CD4-positive, alpha-beta memory T cell (primary cell): ENCODE measurements at regions of chr1 and their contacts with region 1.

Region 1: DNA sequence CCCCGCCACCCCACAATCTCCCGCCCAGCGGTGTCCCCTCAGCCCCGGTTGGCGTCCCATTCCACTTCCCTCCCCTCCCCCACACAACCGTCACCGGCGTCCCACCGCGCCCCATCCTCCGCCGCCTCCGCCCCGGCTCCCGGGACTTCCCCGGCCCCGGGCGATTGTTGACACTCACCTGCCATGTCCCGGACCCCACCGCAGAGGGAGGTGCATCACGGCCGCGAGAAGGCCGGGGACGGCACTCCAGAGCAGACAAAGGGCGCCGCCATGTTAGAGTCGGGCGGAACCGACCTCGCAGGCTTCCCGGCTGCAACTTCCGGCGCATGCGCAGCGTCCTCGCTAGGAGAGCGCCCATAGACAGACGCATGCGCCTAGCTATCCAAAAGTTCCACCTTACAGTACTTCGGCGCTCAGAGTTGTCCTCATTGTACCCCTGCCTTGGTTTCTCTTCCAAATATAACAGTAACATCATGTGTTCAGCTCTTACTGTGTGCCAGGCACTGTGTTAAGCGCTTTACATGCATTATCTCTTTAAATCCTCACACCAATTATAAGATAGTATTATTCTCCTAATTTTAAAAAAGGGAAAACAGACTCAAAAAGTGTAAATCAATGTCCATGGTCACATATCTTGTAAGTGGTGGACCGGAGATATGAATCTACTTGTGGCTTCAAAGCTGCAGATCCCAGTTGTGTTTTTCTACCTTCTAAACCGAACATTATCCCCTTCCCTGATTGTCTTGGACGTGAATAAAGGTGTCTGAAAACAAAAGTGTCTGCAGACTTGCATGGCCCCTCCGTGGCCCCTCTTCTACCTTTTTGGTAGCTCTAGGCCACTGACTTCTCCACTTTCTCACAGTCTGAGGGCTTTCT is at the start of gene ZBTB17:
- DNase-seq: peak; percentile 94 to 96 (median 95)
- H3K4me3 ChIP-seq: peak within 1 kb of the TSS; percentile 43 to 83
- H3K4me3 Mint-ChIP-seq: peak within 1 kb of the TSS; percentile 87 to 97 (median 89)
- H3K27ac ChIP-seq: peak within 1 kb of the TSS; percentile 70
- H3K27ac Mint-ChIP-seq: peak within 1 kb of the TSS; percentile 88 to 96 (median 94)
- H3K4me1 ChIP-seq: peaks cover 25% of the 10 kb centered on the region
- H3K4me1 Mint-ChIP-seq: peaks cover 22 to 43% (median 32%) of the 10 kb centered on the region in 4 donors
- H3K27me3 ChIP-seq: no peaks in the 10 kb centered on the region
- H3K27me3 Mint-ChIP-seq: no peaks in the 10 kb centered on the region
- total RNA-seq, gene ZBTB17: 52.6 to 61.0 TPM

Region 2: DNA sequence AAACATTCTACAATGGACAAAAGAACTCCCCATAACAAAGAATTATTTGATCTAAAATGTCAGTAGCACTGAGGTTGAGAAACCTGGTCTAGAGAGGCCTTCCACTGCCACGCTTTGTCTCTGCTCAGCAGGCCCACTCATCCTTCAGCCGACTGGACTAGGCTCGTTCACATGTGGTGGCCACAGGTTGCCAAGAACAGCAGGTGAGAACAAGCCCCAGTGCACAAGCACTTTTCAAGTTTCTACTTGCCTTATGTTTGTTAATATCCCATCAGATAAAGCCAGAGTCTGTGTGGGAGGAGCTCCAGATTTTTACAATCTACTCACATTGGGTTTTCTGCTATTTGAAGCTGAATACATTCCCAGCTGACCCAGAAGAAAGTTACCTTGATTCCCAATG is 575.4 kb before region 1 on chr1:
- CTCF ChIA-PET with region 1: no interaction called
- POLR2A ChIA-PET with region 1: no interaction called
- intact Hi-C with region 1: no loop called
- DNase-seq: no peak
- H3K4me3 ChIP-seq: no peak overlapping the region
- H3K4me3 Mint-ChIP-seq: no peak overlapping the region
- H3K27ac ChIP-seq: no peak overlapping the region
- H3K27ac Mint-ChIP-seq: peak overlapping the region in 1 of 7 donors; percentile 2
- H3K4me1 ChIP-seq: no peaks in the 10 kb centered on the region
- H3K4me1 Mint-ChIP-seq: peaks cover 0 to 5% (median 2%) of the 10 kb centered on the region in 4 donors
- H3K27me3 ChIP-seq: no peaks in the 10 kb centered on the region
- H3K27me3 Mint-ChIP-seq: no peaks in the 10 kb centered on the region

Region 3: DNA sequence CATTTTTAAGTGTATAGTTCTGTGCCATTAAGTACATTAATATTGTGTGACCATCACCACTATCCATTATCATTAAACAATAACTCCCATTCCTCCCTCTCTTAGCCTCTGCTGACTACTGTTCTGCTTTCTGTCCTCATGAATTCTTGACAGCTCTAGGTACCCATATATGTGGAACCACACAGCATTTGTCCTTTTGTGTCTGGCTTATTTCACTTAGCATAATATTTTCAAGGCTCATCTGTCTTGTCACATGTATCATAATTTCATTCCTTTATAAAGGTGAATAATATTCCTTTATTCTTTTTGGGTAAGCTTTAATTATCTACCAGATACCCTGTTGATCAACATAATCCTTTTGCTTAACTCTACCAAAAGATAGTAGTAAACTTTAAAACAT is 80.8 kb before region 1 on chr1:
- CTCF ChIA-PET with region 1: no interaction called
- POLR2A ChIA-PET with region 1: no interaction called
- intact Hi-C with region 1: no loop called
- DNase-seq: no peak
- H3K4me3 ChIP-seq: no peak overlapping the region
- H3K4me3 Mint-ChIP-seq: no peak overlapping the region
- H3K27ac ChIP-seq: no peak overlapping the region
- H3K27ac Mint-ChIP-seq: no peak overlapping the region
- H3K4me1 ChIP-seq: peaks cover 22% of the 10 kb centered on the region
- H3K4me1 Mint-ChIP-seq: peaks cover 31 to 48% (median 41%) of the 10 kb centered on the region in 4 donors
- H3K27me3 ChIP-seq: no peaks in the 10 kb centered on the region
- H3K27me3 Mint-ChIP-seq: no peaks in the 10 kb centered on the region

Region 4: GRCh38 chr1:15949453-15950245 is 26.4 kb before region 1 on chr1:
- CTCF ChIA-PET with region 1: interaction called, 7 read pairs
- POLR2A ChIA-PET with region 1: interaction called, 23 read pairs
- intact Hi-C with region 1: loop called (anchors 1 kb)
- DNase-seq: peak; percentile 82 to 99 (median 84)
- H3K4me3 ChIP-seq: peak overlapping the region in 1 of 2 donors; percentile 18
- H3K4me3 Mint-ChIP-seq: peak overlapping the region; percentile 75 to 91 (median 82)
- H3K27ac ChIP-seq: peak overlapping the region; percentile 79
- H3K27ac Mint-ChIP-seq: peak overlapping the region; percentile 86 to 98 (median 95)
- H3K4me1 ChIP-seq: peaks cover 68% of the 10 kb centered on the region
- H3K4me1 Mint-ChIP-seq: peaks cover 50 to 81% (median 63%) of the 10 kb centered on the region in 4 donors
- H3K27me3 ChIP-seq: no peaks in the 10 kb centered on the region
- H3K27me3 Mint-ChIP-seq: peaks cover 0 to 2% of the 10 kb centered on the region in 2 donors

Region 5: DNA sequence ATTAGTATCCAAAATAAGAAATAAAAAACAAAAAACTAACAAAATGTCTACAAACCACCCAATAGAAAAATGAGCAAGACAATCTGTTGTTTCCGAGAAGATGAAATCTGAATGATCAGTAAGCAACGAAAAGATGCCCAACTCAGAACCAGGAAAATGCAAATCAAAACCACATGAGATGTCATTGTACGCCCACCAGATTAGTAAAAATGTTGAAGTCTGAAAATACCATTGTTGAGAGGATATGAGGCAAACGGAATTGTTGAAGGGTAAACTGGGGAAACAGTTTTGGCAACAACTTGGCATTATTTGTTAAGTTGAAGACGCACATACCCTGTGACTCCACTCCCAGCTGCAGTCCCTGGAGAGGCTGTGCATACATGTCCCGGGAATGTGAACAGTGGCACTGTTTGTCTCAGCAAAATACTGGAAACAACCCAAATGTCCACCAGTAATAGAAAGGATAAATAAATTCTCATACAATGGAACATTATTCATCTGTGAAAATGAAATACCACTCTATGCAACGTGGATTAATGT is 10.7 kb before region 1 on chr1:
- CTCF ChIA-PET with region 1: interaction called, 10 read pairs
- POLR2A ChIA-PET with region 1: interaction called, 10 read pairs
- intact Hi-C with region 1: no loop called
- DNase-seq: no peak
- H3K4me3 ChIP-seq: no peak overlapping the region
- H3K4me3 Mint-ChIP-seq: peak overlapping the region; percentile 17 to 91 (median 82)
- H3K27ac ChIP-seq: peak overlapping the region; percentile 32
- H3K27ac Mint-ChIP-seq: peak overlapping the region; percentile 65 to 93 (median 89)
- H3K4me1 ChIP-seq: peaks cover 47% of the 10 kb centered on the region
- H3K4me1 Mint-ChIP-seq: peaks cover 42 to 74% (median 59%) of the 10 kb centered on the region in 4 donors
- H3K27me3 ChIP-seq: no peaks in the 10 kb centered on the region
- H3K27me3 Mint-ChIP-seq: no peaks in the 10 kb centered on the region

Region 6: GRCh38 chr1:16026723-16027484 is 50.9 kb after region 1 on chr1:
- CTCF ChIA-PET with region 1: no interaction called
- POLR2A ChIA-PET with region 1: no interaction called
- intact Hi-C with region 1: no loop called
- DNase-seq: peak in 3 of 5 donors; percentile 8 to 52 (median 11)
- H3K4me3 ChIP-seq: no peak overlapping the region
- H3K4me3 Mint-ChIP-seq: peak overlapping the region in 1 of 8 donors; percentile 69
- H3K27ac ChIP-seq: no peak overlapping the region
- H3K27ac Mint-ChIP-seq: no peak overlapping the region
- H3K4me1 ChIP-seq: peaks cover 7% of the 10 kb centered on the region
- H3K4me1 Mint-ChIP-seq: peaks cover 0 to 4% (median 2%) of the 10 kb centered on the region in 4 donors
- H3K27me3 ChIP-seq: no peaks in the 10 kb centered on the region
- H3K27me3 Mint-ChIP-seq: peaks cover 14 to 16% of the 10 kb centered on the region in 2 donors

Region 7: GRCh38 chr1:16038620-16038912 is 62.5 kb after region 1 on chr1:
- CTCF ChIA-PET with region 1: no interaction called
- POLR2A ChIA-PET with region 1: no interaction called
- intact Hi-C with region 1: no loop called
- DNase-seq: peak in 1 of 5 donors; percentile 24
- H3K4me3 ChIP-seq: no peak overlapping the region
- H3K4me3 Mint-ChIP-seq: no peak overlapping the region
- H3K27ac ChIP-seq: no peak overlapping the region
- H3K27ac Mint-ChIP-seq: no peak overlapping the region
- H3K4me1 ChIP-seq: no peaks in the 10 kb centered on the region
- H3K4me1 Mint-ChIP-seq: no peaks in the 10 kb centered on the region
- H3K27me3 ChIP-seq: no peaks in the 10 kb centered on the region
- H3K27me3 Mint-ChIP-seq: peaks cover 3 to 5% of the 10 kb centered on the region in 2 donors